H1 (cell line): ENCODE measurements at regions of chr7 and their contacts with region 1.

Region 1: GRCh38 chr7:117458977-117459583 is 20.7 kb upstream of the CFTR start:
- DNase-seq: no peak
- H3K4me3 ChIP-seq: no peak overlapping the region
- H3K27ac ChIP-seq: no peak overlapping the region
- H3K4me1 ChIP-seq: no peaks in the 10 kb centered on the region
- H3K27me3 ChIP-seq: no peaks in the 10 kb centered on the region
- CTCF ChIP-seq: peak in 2 of 3 experiments; percentile 21 to 34; a peak in 2 of 4 replicates
- EP300 ChIP-seq: no peak
- POLR2A ChIP-seq: no peak
- RAD21 ChIP-seq: peak in 1 of 2 experiments; percentile 52; a peak in 3 of 4 replicates

Region 2: GRCh38 chr7:117212969-117213877 is 245.9 kb before region 1 on chr7:
- CTCF ChIA-PET with region 1: no interaction called
- POLR2A ChIA-PET with region 1: no interaction called
- DNase-seq: peak; percentile 34 to 70
- H3K4me3 ChIP-seq: no peak overlapping the region
- H3K27ac ChIP-seq: no peak overlapping the region
- H3K4me1 ChIP-seq: no peaks in the 10 kb centered on the region; a peak in 1 of 7 replicates
- H3K27me3 ChIP-seq: no peaks in the 10 kb centered on the region
- CTCF ChIP-seq: peak; percentile 76 to 88 (median 82)
- EP300 ChIP-seq: no peak
- POLR2A ChIP-seq: no peak
- RAD21 ChIP-seq: peak; percentile 85 to 86

Region 3: GRCh38 chr7:117470777-117471176 is 11.7 kb after region 1 on chr7:
- CTCF ChIA-PET with region 1: interaction called, 19 read pairs
- POLR2A ChIA-PET with region 1: no interaction called
- DNase-seq: no peak
- H3K4me3 ChIP-seq: no peak overlapping the region
- H3K27ac ChIP-seq: no peak overlapping the region
- H3K4me1 ChIP-seq: peaks cover 0 to 2% (median 0%) of the 10 kb centered on the region in 4 experiments; a peak in 3 of 7 replicates
- H3K27me3 ChIP-seq: no peaks in the 10 kb centered on the region
- CTCF ChIP-seq: no peak
- EP300 ChIP-seq: no peak
- POLR2A ChIP-seq: no peak
- RAD21 ChIP-seq: no peak

Region 4: DNA sequence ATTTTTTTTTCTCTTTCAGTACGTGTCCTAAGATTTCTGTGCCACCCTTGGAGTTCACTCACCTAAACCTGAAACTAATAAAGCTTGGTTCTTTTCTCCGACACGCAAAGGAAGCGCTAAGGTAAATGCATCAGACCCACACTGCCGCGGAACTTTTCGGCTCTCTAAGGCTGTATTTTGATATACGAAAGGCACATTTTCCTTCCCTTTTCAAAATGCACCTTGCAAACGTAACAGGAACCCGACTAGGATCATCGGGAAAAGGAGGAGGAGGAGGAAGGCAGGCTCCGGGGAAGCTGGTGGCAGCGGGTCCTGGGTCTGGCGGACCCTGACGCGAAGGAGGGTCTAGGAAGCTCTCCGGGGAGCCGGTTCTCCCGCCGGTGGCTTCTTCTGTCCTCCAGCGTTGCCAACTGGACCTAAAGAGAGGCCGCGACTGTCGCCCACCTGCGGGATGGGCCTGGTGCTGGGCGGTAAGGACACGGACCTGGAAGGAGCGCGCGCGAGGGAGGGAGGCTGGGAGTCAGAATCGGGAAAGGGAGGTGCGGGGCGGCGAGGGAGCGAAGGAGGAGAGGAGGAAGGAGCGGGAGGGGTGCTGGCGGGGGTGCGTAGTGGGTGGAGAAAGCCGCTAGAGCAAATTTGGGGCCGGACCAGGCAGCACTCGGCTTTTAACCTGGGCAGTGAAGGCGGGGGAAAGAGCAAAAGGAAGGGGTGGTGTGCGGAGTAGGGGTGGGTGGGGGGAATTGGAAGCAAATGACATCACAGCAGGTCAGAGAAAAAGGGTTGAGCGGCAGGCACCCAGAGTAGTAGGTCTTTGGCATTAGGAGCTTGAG is 20.4 kb after region 1 on chr7 and contains the start of gene CFTR:
- CTCF ChIA-PET with region 1: interaction called, 19 read pairs
- POLR2A ChIA-PET with region 1: interaction called, 3 read pairs
- DNase-seq: peak in 1 of 2 experiments; percentile 73
- H3K4me3 ChIP-seq: peak within 1 kb of the TSS; percentile 43 to 84 (median 67)
- H3K27ac ChIP-seq: no peak within 1 kb of the TSS
- H3K4me1 ChIP-seq: no peaks in the 10 kb centered on the region; a peak in 1 of 7 replicates
- H3K27me3 ChIP-seq: peaks cover 0 to 13% (median 4%) of the 10 kb centered on the region in 4 experiments; a peak in 2 of 7 replicates
- CTCF ChIP-seq: no peak
- EP300 ChIP-seq: no peak
- POLR2A ChIP-seq: 0 out of 3 replicates have a peak, but pooled peaks of 1 of the 2 experiments have one; percentile 40
- RAD21 ChIP-seq: no peak
- total RNA-seq, gene CFTR: 1.2 and 1.7 TPM in 2 replicates

Region 5: GRCh38 chr7:117485016-117485655 is 26.1 kb after region 1 on chr7:
- CTCF ChIA-PET with region 1: interaction called, 10 read pairs
- POLR2A ChIA-PET with region 1: no interaction called
- DNase-seq: no peak
- H3K4me3 ChIP-seq: no peak overlapping the region
- H3K27ac ChIP-seq: no peak overlapping the region
- H3K4me1 ChIP-seq: peaks cover 0 to 9% (median 6%) of the 10 kb centered on the region in 4 experiments; a peak in 5 of 7 replicates
- H3K27me3 ChIP-seq: peaks cover 0 to 7% (median 2%) of the 10 kb centered on the region in 4 experiments; a peak in 2 of 7 replicates
- CTCF ChIP-seq: no peak
- EP300 ChIP-seq: no peak
- POLR2A ChIP-seq: no peak
- RAD21 ChIP-seq: no peak

Region 6: DNA sequence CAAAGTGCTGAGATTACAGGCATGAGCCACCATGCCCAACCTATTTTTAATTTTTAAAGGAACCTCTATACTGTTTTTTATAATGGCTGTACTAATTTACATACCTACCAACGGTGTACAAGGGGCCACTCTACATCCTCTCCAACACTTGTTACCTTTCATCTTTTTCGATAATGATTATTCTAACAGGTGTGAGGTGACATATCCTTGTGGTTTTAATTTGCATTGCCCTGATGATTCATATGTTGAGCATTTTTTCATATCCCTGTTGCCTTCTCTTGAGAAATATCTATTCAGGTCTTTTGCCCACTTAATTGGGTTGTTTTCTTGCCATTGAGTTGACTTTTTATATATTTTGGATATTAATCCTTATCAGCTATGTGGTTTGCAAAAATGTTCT is 247.1 kb after region 1 on chr7:
- CTCF ChIA-PET with region 1: no interaction called
- POLR2A ChIA-PET with region 1: no interaction called
- DNase-seq: no peak
- H3K4me3 ChIP-seq: no peak overlapping the region
- H3K27ac ChIP-seq: no peak overlapping the region
- H3K4me1 ChIP-seq: no peaks in the 10 kb centered on the region
- H3K27me3 ChIP-seq: no peaks in the 10 kb centered on the region
- CTCF ChIP-seq: no peak
- EP300 ChIP-seq: no peak
- POLR2A ChIP-seq: no peak
- RAD21 ChIP-seq: no peak